Tibial artery (tissue), 4 donors: ENCODE measurements at regions of chr3 and their contacts with region 1.

Region 1: GRCh38 chr3:21140785-21141184 is 610.2 kb downstream of the ZNF385D start:
- DNase-seq: no peak
- H3K4me3 ChIP-seq: no peak overlapping the region
- H3K27ac ChIP-seq: no peak overlapping the region
- H3K4me1 ChIP-seq: no peaks in the 10 kb centered on the region
- H3K27me3 ChIP-seq: no peaks in the 10 kb centered on the region
- CTCF ChIP-seq: no peak

Region 2: GRCh38 chr3:19898721-19899120 is 1242.1 kb before region 1 on chr3:
- intact Hi-C with region 1: loop called (anchors 5 kb)
- DNase-seq: no peak
- H3K4me3 ChIP-seq: no peak overlapping the region
- H3K27ac ChIP-seq: no peak overlapping the region
- H3K4me1 ChIP-seq: no peaks in the 10 kb centered on the region
- H3K27me3 ChIP-seq: no peaks in the 10 kb centered on the region
- CTCF ChIP-seq: no peak

Region 3: DNA sequence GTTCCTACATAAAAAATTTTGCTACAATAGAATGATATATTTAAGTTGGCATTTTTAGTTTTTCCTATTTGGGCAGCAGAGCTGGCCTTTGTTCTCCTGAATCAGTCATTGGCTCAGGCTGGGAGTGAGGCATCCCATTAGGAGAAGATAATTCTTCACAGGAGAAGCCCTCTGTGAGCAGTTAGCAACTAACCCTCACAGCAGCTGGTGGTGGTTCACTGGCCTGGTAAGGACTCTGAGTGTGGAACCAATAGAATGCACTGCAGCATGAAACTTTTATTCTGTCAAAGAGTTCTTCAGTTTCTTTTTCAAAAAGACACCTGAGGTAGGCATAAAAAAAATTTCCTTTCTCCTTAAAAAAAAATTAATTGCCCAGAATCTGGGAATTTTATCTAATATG is 47.7 kb after region 1 on chr3:
- intact Hi-C with region 1: loop called (anchors 2 kb)
- DNase-seq: no peak
- H3K4me3 ChIP-seq: no peak overlapping the region
- H3K27ac ChIP-seq: no peak overlapping the region
- H3K4me1 ChIP-seq: no peaks in the 10 kb centered on the region
- H3K27me3 ChIP-seq: no peaks in the 10 kb centered on the region
- CTCF ChIP-seq: no peak

Region 4: GRCh38 chr3:21638488-21638887 is 497.7 kb after region 1 on chr3:
- intact Hi-C with region 1: no loop called
- DNase-seq: no peak
- H3K4me3 ChIP-seq: no peak overlapping the region
- H3K27ac ChIP-seq: no peak overlapping the region
- H3K4me1 ChIP-seq: peaks cover 0 to 6% (median 0%) of the 10 kb centered on the region in 4 donors
- H3K27me3 ChIP-seq: no peaks in the 10 kb centered on the region
- CTCF ChIP-seq: no peak